ENCODE measurements at regions of chr12 and their contacts with region 1.

Region 1: DNA sequence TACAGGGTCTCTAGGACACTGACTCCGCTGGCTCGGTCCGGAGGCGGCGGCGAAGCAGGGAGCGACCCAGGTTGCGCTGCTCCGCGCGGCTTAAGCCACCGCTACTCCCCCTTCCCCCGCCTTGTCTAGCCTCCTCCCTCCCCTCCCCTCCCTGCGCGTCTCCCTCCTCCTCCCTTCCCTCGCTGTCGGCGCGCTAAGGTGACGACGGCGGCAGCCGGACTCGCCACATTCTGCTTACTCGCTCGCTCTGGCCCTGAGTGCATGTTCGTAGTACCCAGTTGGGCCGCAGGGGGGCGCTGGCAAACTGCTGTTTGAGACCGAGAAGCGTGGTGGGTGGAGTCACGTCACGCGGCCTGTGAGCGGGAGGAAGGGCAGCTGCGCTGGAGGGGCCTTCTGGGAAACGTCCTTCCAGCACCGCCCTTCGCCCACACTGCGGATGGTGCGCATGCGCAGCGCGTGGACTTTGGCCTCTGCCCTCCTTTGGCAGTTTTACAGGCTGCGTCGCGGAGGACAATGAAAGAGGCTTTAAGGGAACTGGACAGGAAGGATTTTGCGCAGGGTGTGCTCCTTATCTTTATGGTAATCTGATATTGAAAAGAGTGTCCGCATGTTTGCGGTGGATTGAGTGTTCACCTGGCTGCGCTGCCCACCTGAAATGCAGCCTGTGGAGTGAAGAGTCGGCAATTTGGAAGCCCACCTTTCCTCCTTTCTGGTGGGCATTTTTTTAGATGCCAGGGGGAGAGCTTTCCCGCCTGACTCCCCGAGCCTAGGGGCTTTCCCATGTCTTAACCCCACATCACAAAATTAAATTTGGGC is at the start of gene SCAF11:
- H3K4me3 Mint-ChIP-seq: peak within 1 kb of the TSS; percentile 99
- H3K27ac Mint-ChIP-seq: peak within 1 kb of the TSS; percentile 99
- H3K4me1 Mint-ChIP-seq: peaks cover 40% of the 10 kb centered on the region
- H3K27me3 Mint-ChIP-seq: no peaks in the 10 kb centered on the region

Region 2: DNA sequence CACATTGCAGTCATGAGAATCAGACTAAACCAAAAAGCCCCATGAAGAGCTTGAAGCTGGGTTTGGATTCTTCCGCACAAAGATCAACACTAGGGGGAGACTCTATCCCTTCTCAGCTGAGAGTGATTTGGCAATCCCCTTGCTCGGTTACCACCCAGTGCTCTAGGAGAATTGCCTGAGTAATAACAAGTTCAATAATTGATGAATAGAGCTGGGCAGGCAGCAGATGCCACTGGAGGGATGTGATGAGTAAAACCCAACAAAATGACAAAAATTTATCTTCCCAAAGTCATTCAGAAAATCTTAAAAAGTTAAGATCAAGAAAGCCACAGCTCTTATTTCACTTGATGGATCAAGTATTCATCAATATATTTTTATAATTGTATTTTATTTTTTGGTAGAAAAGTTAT is 446.8 kb before region 1 on chr12:
- intact Hi-C with region 1: loop called (anchors 10 kb)
- H3K4me3 Mint-ChIP-seq: no peak overlapping the region
- H3K27ac Mint-ChIP-seq: no peak overlapping the region
- H3K4me1 Mint-ChIP-seq: no peaks in the 10 kb centered on the region
- H3K27me3 Mint-ChIP-seq: peaks cover 1% of the 10 kb centered on the region

Region 3: GRCh38 chr12:45728630-45729232 is 261.9 kb before region 1 on chr12:
- intact Hi-C with region 1: loop called (anchors 2 kb)
- H3K4me3 Mint-ChIP-seq: peak overlapping the region; percentile 96
- H3K27ac Mint-ChIP-seq: peak overlapping the region; percentile 96
- H3K4me1 Mint-ChIP-seq: peaks cover 13% of the 10 kb centered on the region
- H3K27me3 Mint-ChIP-seq: no peaks in the 10 kb centered on the region

Region 4: GRCh38 chr12:46108721-46109120 is 118.0 kb after region 1 on chr12:
- intact Hi-C with region 1: no loop called
- H3K4me3 Mint-ChIP-seq: no peak overlapping the region
- H3K27ac Mint-ChIP-seq: no peak overlapping the region
- H3K4me1 Mint-ChIP-seq: no peaks in the 10 kb centered on the region
- H3K27me3 Mint-ChIP-seq: peaks cover 2% of the 10 kb centered on the region

Region 5: DNA sequence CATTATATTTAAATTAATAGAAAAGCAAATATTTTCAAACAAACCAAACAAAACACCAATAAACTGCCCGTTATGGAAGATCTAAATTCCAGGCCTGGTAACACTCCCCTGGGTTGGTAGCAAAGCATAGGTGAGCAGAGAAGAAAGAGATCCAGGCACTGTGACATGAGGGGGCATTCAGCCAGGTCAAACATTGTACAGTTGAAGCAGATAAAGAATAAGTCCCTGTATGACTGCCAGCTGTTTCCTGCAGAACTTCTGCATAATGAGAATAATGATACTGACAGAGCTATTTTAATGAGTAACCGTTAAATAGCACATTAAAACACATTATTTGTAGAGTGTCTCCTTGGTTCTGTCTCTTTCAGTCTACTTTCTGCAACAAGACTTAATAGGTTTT is 242.7 kb after region 1 on chr12:
- intact Hi-C with region 1: no loop called
- H3K4me3 Mint-ChIP-seq: no peak overlapping the region
- H3K27ac Mint-ChIP-seq: no peak overlapping the region
- H3K4me1 Mint-ChIP-seq: peaks cover 19% of the 10 kb centered on the region
- H3K27me3 Mint-ChIP-seq: peaks cover 9% of the 10 kb centered on the region

Region 6: DNA sequence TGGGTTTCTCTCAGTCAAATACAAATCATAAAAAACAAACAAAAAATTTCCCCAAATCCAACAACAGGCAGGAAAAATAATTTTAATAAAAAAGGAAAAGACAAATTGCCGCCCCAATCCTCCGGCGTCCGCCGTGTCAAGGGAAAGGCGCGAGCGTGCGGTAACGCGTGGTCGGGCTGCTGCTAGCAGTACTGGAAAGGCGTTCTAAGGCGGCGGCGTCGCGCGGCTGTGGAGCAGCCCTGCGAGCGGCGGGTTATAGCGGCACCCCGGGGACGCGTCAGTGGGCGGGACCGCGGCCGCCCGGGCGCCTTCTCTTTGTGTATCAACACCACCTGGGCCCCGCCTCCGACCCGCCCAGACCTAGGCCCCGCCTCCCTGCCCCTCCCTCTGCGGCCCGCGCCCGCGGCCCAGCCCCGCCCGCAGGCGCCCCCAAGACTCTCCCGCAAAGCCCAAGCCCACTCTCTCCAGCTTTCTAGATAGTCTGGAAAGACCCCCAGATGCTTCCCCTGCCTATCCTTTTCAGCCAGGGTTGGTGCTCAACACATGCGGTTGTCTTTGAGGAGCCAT is 382.0 kb after region 1 on chr12 and contains the start of gene SLC38A2:
- intact Hi-C with region 1: loop called (anchors 2 kb)
- H3K4me3 Mint-ChIP-seq: peak within 1 kb of the TSS; percentile 93
- H3K27ac Mint-ChIP-seq: peak within 1 kb of the TSS; percentile 99
- H3K4me1 Mint-ChIP-seq: peaks cover 38% of the 10 kb centered on the region
- H3K27me3 Mint-ChIP-seq: peaks cover 6% of the 10 kb centered on the region

Region 7: DNA sequence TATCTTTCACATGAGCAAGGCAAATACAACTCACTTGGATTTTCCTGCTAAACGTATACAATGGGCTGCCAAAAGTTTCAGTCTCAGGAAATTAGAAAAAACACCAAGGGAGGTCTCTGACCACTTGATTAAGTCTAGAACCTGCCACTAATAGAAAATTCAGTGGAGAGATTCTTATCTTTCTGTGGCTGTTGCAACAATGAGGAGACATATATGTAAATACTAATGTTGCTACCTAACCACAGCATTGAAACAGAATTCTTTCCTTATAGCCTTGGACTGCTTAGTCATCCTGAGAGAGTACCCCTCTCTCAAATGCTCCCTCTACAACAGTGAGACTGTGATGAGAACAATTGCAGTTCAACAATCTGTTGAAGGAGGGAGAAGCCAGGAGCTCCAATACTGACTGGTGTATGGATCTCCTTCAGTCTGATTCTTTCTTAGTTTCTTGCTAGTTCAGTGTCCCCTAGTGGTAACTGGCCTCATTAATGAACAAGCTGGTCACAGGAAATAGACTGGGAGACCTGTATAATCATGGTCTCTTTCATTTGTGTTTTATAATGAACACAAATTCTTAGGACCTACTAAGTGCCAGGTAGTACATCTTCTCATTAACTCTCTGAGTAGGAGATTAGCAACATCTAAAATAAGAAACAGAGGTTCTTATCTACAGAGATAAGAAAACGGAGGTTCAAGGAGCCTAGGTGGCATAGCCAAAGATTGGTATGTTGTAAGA is 670.6 kb after region 1 on chr12:
- intact Hi-C with region 1: loop called (anchors 10 kb)
- H3K4me3 Mint-ChIP-seq: no peak overlapping the region
- H3K27ac Mint-ChIP-seq: peak overlapping the region; percentile 57
- H3K4me1 Mint-ChIP-seq: peaks cover 33% of the 10 kb centered on the region
- H3K27me3 Mint-ChIP-seq: no peaks in the 10 kb centered on the region

Measured in dendritic cell treated with granulocyte-macrophage colony-stimulating factor and Interleukin-4, amounts not matched to agents 40 ng/mL and 50 ng/mL, for 4 days (primary cell).